AG04450 (cell line): ENCODE measurements at regions of chr2 and their contacts with region 1.

Region 1: GRCh38 chr2:240369801-240370585 is 65.5 kb upstream of the GPC1 start:
- DNase-seq: peak; percentile 89
- H3K4me3 ChIP-seq: no peak overlapping the region
- H3K27ac ChIP-seq: peak overlapping the region; percentile 97
- H3K27me3 ChIP-seq: no peaks in the 10 kb centered on the region
- CTCF ChIP-seq: no peak; the same call in 1 of the 2 replicates

Region 2: GRCh38 chr2:239858179-239858578 is 511.8 kb before region 1 on chr2:
- CTCF ChIA-PET with region 1: no interaction called
- POLR2A ChIA-PET with region 1: no interaction called
- DNase-seq: no peak
- H3K4me3 ChIP-seq: no peak overlapping the region
- H3K27ac ChIP-seq: no peak overlapping the region
- H3K27me3 ChIP-seq: no peaks in the 10 kb centered on the region
- CTCF ChIP-seq: no peak

Region 3: GRCh38 chr2:240300261-240300821 is 69.7 kb before region 1 on chr2:
- CTCF ChIA-PET with region 1: no interaction called
- POLR2A ChIA-PET with region 1: no interaction called
- DNase-seq: no peak
- H3K4me3 ChIP-seq: no peak overlapping the region
- H3K27ac ChIP-seq: no peak overlapping the region
- H3K27me3 ChIP-seq: peaks cover 14% of the 10 kb centered on the region
- CTCF ChIP-seq: no peak

Region 4: DNA sequence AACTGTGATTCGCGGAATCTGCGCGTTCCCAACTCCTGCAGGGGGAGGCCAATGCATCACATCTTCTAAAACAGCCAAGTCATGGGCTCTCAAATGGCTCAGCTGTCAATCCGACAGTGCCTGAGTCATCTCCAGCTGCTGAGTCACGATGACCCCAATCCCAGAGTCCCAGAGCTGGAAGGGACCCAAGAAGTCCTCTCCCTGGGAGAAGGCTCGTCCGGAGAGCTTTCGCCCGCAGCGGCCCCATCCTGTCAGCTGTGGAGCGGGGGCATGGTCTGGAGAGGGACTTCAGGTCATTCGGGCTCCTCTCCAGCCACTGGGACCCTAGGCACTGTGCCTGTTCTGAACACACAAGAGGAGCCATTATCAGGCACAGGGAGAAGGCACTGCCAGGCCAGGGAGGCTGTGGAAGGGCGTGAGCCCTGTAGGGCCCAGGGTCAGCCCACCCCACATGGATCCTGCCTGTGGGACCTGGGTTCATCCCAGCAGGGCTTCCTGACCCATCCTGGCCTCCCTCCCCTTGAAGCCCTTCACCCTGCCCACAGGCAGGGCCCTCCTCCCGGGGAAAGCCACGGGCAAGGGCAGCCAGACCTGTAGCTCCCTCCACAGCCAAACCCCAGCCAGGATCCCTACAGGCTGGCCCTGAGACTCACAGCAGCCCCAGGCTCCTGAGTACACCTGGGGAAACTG is 17.8 kb after region 1 on chr2:
- CTCF ChIA-PET with region 1: no interaction called
- POLR2A ChIA-PET with region 1: interaction called, 17 read pairs
- DNase-seq: peak; percentile 91
- H3K4me3 ChIP-seq: no peak overlapping the region
- H3K27ac ChIP-seq: peak overlapping the region; percentile 92
- H3K27me3 ChIP-seq: no peaks in the 10 kb centered on the region
- CTCF ChIP-seq: peak; percentile 24; the same call in 1 of the 2 replicates